ENCODE measurements at regions of chr11 and their contacts with region 1.

Region 1: DNA sequence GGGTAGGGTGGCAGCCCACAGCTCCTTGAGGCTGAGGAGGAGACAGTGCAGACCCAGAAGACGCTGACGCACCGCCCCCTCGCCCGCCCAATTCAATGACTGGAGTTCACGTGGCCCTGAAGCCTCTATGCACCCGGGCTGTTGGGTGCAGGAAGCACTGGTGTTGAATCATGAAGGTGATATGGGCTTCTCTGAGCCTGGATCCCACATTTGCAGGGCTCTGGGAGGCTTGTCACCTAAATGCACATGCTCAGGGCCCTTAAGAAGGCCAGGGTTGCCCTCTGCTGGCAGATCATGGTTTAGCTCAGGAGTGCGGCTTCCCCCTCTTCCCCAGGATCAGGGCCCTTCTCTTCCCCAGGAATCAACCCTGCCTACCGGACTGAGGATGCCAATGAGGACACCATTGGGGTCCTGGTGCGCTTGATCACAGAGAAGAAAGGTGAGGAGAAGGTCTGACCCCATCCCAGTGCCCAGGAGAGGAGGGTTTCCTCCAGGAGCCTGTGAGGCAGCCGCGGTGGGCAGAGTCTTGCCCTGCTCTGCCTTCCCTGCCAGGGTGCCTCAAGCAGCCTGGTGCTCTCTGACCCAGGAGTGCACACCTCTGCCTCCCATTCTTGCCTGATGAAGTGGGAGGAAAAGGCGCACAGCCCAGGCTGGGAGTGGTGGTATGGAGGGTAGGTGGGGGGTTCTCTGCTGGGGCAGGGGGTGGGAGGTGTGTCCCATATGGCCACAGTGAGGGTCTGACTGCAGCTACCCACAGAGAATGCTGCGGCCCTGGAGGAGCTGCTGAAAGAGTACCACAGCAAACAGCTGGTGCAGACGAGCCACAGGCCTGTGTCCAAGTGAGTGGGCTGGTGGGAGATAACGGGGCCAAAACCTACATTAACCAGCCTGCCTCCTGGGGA is 17.5 kb downstream of the RELT start:
- DNase-seq: peak; percentile 65
- ATAC-seq: peak; percentile 79
- H3K4me3 ChIP-seq: no peak overlapping the region
- H3K27ac ChIP-seq: no peak overlapping the region
- H3K4me1 ChIP-seq: no peaks in the 10 kb centered on the region
- H3K27me3 ChIP-seq: no peaks in the 10 kb centered on the region
- CTCF ChIP-seq: peak; percentile 90
- EP300 ChIP-seq: no peak
- POLR2A ChIP-seq: no peak
- RAD21 ChIP-seq: peak; percentile 78

Region 2: DNA sequence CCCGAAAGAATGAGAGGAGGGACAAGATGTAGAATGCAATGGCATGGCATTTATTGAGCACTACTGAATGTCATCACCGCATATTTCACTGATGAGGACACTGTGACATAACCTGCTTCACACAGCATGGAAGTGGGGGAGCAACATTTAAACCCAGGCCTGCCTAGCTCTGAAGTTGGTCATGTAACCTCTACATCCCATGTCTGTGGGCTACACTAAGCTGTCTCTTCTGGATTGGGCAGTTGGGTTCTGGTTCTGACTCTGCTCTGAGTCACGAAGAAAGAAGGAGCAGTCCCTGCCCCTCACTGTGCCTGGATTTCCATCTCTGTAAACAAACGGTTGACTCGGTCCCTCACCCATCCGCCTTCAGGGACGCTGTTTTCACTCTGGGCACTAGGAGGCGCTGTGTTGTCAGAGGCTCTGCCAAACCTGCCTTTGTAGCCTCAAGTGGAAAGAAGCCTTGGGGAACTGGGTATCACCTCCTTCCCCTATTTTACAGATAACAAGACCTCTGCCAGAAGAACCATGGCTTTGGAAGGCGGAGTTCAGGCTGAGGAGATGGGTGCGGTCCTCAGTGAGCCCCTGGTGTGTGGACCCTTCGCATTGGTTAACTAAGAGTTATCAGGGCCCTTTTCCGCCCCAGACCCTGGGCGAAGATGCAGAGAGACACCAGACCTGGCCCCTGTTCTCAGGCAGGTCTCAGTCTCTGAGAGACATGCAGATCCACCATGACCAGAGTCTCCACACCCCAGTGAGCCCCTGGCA is 98.3 kb before region 1 on chr11:
- CTCF ChIA-PET with region 1: interaction called, 13 read pairs
- POLR2A ChIA-PET with region 1: no interaction called
- in situ Hi-C with region 1: loop called (anchors 5 kb)
- intact Hi-C with region 1: no loop called
- DNase-seq: peak; percentile 57
- ATAC-seq: peak; percentile 67
- H3K4me3 ChIP-seq: no peak overlapping the region
- H3K27ac ChIP-seq: no peak overlapping the region
- H3K4me1 ChIP-seq: no peaks in the 10 kb centered on the region
- H3K27me3 ChIP-seq: peaks cover 8 to 35% of the 10 kb centered on the region in 2 experiments; a peak in 3 of 5 replicates
- CTCF ChIP-seq: peak; percentile 93
- EP300 ChIP-seq: no peak
- POLR2A ChIP-seq: no peak
- RAD21 ChIP-seq: peak; percentile 60; the same call in 1 of the 2 replicates

Region 3: GRCh38 chr11:73307323-73308002 is 86.3 kb before region 1 on chr11:
- CTCF ChIA-PET with region 1: interaction called, 6 read pairs
- POLR2A ChIA-PET with region 1: interaction called, 3 read pairs
- in situ Hi-C with region 1: no loop called
- intact Hi-C with region 1: loop called (anchors 1 kb)
- DNase-seq: peak; percentile 95
- ATAC-seq: peak; percentile 70
- H3K4me3 ChIP-seq: peak overlapping the region; percentile 82 to 86 (median 85)
- H3K27ac ChIP-seq: peak overlapping the region; percentile 99
- H3K4me1 ChIP-seq: peaks cover 44% of the 10 kb centered on the region
- H3K27me3 ChIP-seq: peaks cover 0 to 4% of the 10 kb centered on the region in 2 experiments; a peak in 2 of 5 replicates
- CTCF ChIP-seq: peak; percentile 96
- EP300 ChIP-seq: peak in 1 of 2 experiments; percentile 30; a peak in 1 of 4 replicates
- POLR2A ChIP-seq: peak in 1 of 2 experiments; percentile 91; a peak in 2 of 4 replicates
- RAD21 ChIP-seq: peak; percentile 95

Region 4: DNA sequence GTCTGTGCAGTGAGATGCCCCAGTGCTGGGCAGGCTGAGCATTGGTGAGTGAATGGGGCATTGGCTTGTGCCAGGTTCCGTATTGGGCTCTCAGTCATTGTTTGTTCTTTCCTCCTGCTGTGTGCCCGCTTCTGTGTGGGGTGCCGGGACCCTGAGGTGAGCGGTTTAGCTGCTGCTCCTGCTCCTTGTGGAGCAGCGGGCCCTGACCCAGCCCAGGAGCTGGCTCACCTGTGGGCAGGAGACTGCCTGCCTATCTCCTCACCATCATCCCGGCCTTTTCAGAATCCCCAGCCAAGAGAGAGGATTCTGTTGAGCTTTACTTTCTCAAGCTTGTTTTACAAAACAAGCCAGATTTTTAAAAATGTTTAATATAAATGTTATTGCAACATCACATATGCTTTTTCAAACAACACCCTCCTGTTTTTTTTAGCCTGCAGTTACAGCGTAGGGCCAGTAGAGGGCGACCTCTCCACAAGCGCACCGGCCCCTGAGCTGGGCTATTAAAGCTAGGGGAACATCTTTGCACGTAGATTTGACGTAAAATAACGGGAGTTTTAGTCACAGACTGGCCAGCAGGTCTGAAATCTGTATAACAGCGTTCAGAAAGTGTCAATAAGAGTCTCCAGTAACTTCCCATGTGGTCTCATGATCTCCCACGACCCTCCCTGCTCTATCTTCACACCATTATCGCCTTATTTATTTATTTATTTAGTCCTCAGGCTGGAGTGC is 42.7 kb before region 1 on chr11:
- CTCF ChIA-PET with region 1: interaction called, 16 read pairs
- POLR2A ChIA-PET with region 1: no interaction called
- in situ Hi-C with region 1: loop called (anchors 5 kb)
- intact Hi-C with region 1: no loop called
- DNase-seq: peak; percentile 40
- ATAC-seq: peak; percentile 36
- H3K4me3 ChIP-seq: no peak overlapping the region
- H3K27ac ChIP-seq: no peak overlapping the region
- H3K4me1 ChIP-seq: peaks cover 21% of the 10 kb centered on the region
- H3K27me3 ChIP-seq: no peaks in the 10 kb centered on the region
- CTCF ChIP-seq: peak; percentile 78
- EP300 ChIP-seq: no peak
- POLR2A ChIP-seq: no peak
- RAD21 ChIP-seq: peak; percentile 37; the same call in 1 of the 2 replicates